ENCODE measurements at regions of chr6 and their contacts with region 1.

Region 1: DNA sequence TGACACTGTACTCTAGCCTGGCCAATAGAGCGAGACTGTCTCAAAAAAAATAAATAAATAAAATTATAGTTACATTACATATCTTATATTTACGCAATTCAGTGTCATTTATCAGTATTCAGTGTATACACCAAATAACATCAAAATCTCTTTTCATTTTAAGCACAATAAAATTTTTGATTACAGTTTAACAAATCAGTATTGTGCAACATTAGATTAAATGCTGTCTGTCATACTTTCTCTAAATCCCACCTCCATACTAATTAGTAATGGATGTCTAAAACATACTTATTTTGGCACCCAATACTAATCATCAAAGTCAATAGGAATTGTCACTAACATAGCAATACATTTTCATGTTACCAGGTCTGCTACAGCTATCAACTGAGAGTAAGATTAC is 27.4 kb downstream of the IBTK start:
- H3K4me3 Mint-ChIP-seq: no peak overlapping the region
- H3K27ac Mint-ChIP-seq: no peak overlapping the region
- H3K4me1 Mint-ChIP-seq: peaks cover 18% of the 10 kb centered on the region
- H3K27me3 Mint-ChIP-seq: no peaks in the 10 kb centered on the region

Region 2: GRCh38 chr6:82166493-82166892 is 53.7 kb before region 1 on chr6:
- intact Hi-C with region 1: no loop called
- H3K4me3 Mint-ChIP-seq: no peak overlapping the region
- H3K27ac Mint-ChIP-seq: no peak overlapping the region
- H3K4me1 Mint-ChIP-seq: no peaks in the 10 kb centered on the region
- H3K27me3 Mint-ChIP-seq: no peaks in the 10 kb centered on the region

Region 3: GRCh38 chr6:82185948-82186535 is 34.1 kb before region 1 on chr6:
- intact Hi-C with region 1: loop called (anchors 5 kb)
- H3K4me3 Mint-ChIP-seq: no peak overlapping the region
- H3K27ac Mint-ChIP-seq: no peak overlapping the region
- H3K4me1 Mint-ChIP-seq: no peaks in the 10 kb centered on the region
- H3K27me3 Mint-ChIP-seq: no peaks in the 10 kb centered on the region